Esophagus muscularis mucosa (tissue), 4 donors: ENCODE measurements at regions of chr14 and their contacts with region 1.

Region 1: DNA sequence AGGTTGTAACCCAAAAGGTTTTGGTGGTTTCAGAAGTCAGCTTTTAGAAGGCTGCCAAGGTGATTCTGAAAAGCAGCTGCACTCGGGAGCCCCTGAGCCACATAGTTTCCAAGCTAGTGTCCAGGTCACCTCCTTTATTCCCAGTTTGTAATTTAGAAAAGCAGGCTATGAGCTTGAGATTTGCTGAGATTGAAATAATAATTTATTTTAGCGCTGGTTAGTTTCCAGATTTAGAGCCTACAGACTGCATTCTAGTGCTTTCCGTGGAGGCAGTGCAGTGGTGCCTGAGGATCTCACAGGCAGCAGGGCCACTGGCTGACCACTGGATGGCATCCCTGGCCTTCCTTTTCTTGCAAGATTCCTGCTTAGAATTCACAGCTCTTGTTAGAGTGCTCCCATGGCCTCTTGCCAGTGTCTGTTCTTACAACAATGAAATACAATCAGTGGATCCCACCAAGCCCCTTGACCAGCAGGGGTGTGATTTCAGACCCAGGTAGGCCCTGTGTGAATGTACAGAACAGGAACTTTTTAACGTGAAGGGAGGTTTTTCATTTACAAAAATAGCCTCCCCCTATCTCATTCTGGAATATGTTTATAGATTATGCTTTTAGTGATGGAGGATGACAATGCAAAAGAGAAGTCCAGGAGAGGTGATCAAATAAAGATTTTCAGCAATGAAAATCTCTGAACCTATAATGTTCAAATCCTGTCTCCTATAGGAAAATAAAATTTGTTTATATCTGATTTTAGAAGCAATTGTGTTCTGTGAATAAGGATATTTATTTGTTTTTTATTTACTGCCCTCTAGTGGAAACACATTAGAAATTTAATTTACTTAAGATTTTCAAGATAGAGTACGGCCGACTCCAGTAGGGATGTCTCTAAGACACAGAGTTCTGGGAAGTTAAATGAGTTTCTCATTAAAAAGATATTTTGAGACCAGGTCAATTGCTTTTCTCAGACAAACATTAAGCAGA is 362.1 kb upstream of the STXBP6 start:
- DNase-seq: no peak
- H3K4me3 ChIP-seq: no peak overlapping the region
- H3K27ac ChIP-seq: no peak overlapping the region
- H3K4me1 ChIP-seq: peaks cover 0 to 32% (median 25%) of the 10 kb centered on the region in 4 donors
- H3K27me3 ChIP-seq: no peaks in the 10 kb centered on the region
- CTCF ChIP-seq: peak; percentile 35 to 48 (median 40)
- EP300 ChIP-seq: no peak
- POLR2A ChIP-seq: no peak

Region 2: DNA sequence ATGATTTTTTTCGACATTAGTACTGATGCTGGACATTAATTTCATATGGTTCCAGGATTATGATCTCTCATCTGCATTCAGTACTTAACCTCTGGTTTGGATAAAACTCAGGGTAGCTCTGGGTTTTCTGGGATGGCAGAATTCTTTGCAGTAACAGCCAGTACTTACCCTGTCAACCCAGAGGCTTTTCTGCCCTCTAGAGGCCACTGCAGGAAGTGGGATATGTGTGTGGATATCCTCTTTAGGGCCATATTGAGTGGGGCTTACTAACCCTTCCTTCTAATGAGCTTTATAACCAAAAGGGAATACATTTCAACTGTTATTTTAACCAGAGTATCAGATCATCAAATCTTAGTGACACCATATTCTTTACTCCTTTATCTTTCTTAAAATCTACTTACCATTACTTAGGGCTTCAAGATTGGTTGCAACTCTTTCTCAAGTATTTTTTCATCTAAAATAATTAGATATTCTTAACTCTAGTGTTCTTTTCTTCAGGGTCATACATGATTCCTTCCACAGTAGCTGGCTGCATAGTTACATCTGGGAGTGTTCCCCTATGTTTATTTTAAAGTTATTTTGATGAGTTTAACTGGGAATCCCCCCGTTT is 125.9 kb after region 1 on chr14:
- intact Hi-C with region 1: loop called (anchors 10 kb)
- DNase-seq: no peak
- H3K4me3 ChIP-seq: no peak overlapping the region
- H3K27ac ChIP-seq: no peak overlapping the region
- H3K4me1 ChIP-seq: no peaks in the 10 kb centered on the region
- H3K27me3 ChIP-seq: no peaks in the 10 kb centered on the region
- CTCF ChIP-seq: peak; percentile 50 to 66 (median 54)
- EP300 ChIP-seq: no peak
- POLR2A ChIP-seq: no peak